ENCODE measurements at regions of chr1 and their contacts with region 1.

Region 1: GRCh38 chr1:19010995-19011844 is 54.7 kb upstream of the IFFO2 start:
- DNase-seq: peak; percentile 95
- ATAC-seq: peak; percentile 61
- H3K4me3 ChIP-seq: peak overlapping the region; percentile 42 to 67 (median 43); a peak in 5 of 6 replicates
- H3K27ac ChIP-seq: peak overlapping the region; percentile 63
- H3K4me1 ChIP-seq: peaks cover 88% of the 10 kb centered on the region
- H3K27me3 ChIP-seq: no peaks in the 10 kb centered on the region
- CTCF ChIP-seq: no peak
- EP300 ChIP-seq: peak in 1 of 2 experiments; percentile 85; a peak in 2 of 4 replicates
- POLR2A ChIP-seq: peak in 1 of 2 experiments; percentile 55; a peak in 1 of 4 replicates
- RAD21 ChIP-seq: no peak

Region 2: GRCh38 chr1:18902523-18903290 is 108.5 kb before region 1 on chr1 and contains the start of gene ALDH4A1:
- CTCF ChIA-PET with region 1: no interaction called
- POLR2A ChIA-PET with region 1: interaction called, 6 read pairs
- in situ Hi-C with region 1: no loop called
- intact Hi-C with region 1: loop called (anchors 2 kb)
- DNase-seq: peak; percentile 98
- ATAC-seq: peak; percentile 89
- H3K4me3 ChIP-seq: peak within 1 kb of the TSS; percentile 81 to 95 (median 94)
- H3K27ac ChIP-seq: peak within 1 kb of the TSS; percentile 95
- H3K4me1 ChIP-seq: peaks cover 45% of the 10 kb centered on the region
- H3K27me3 ChIP-seq: no peaks in the 10 kb centered on the region
- CTCF ChIP-seq: peak; percentile 47
- EP300 ChIP-seq: no peak
- POLR2A ChIP-seq: peak; percentile 75 to 77
- RAD21 ChIP-seq: 0 out of 2 replicates have a peak, but pooled peaks have one; percentile 7
- total RNA-seq, gene ALDH4A1: 58.5 and 76.4 TPM in 2 replicates

Region 3: DNA sequence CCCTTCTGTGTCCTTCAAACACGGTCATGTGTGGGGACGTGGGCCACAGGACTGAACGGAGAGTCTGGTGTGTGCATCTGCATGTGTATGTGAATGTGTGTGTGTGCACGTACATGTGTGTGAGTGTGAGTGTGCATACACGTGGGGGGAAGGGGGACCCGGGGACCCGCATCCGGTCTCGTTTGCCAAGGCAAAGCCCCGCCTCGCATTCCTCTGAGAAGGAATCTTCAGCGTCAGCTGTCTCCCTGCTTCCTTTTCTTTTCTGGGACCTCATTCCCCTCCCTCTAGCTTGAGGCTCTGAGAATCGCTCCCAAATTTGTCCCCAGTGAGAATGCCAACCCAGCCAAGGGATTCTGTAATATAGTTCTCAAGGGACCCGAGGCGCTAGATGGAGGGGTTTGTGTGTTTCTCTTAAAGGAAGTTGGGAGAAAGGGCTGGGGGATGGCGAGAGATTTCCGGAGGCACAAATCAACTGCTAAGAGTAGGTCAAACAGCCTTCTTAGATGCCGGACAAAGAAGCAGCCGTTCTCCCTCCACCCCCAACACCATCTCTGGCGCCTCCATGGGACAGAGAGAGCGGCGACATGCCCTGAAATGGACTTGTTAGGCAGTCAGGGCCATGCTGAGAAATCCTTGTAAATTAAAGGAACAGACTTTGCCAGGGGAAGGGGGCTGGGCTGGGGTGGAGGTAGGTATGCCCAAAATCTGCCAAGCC is 61.4 kb before region 1 on chr1:
- CTCF ChIA-PET with region 1: no interaction called
- POLR2A ChIA-PET with region 1: interaction called, 37 read pairs
- in situ Hi-C with region 1: loop called (anchors 5 kb)
- intact Hi-C with region 1: loop called (anchors 1 kb)
- DNase-seq: peak; percentile 48
- ATAC-seq: peak; percentile 54
- H3K4me3 ChIP-seq: peak overlapping the region; percentile 53 to 75 (median 73)
- H3K27ac ChIP-seq: peak overlapping the region; percentile 93
- H3K4me1 ChIP-seq: peaks cover 95% of the 10 kb centered on the region
- H3K27me3 ChIP-seq: no peaks in the 10 kb centered on the region
- CTCF ChIP-seq: peak; percentile 45
- EP300 ChIP-seq: no peak
- POLR2A ChIP-seq: no peak
- RAD21 ChIP-seq: no peak; the same call in 1 of the 2 replicates

Region 4: DNA sequence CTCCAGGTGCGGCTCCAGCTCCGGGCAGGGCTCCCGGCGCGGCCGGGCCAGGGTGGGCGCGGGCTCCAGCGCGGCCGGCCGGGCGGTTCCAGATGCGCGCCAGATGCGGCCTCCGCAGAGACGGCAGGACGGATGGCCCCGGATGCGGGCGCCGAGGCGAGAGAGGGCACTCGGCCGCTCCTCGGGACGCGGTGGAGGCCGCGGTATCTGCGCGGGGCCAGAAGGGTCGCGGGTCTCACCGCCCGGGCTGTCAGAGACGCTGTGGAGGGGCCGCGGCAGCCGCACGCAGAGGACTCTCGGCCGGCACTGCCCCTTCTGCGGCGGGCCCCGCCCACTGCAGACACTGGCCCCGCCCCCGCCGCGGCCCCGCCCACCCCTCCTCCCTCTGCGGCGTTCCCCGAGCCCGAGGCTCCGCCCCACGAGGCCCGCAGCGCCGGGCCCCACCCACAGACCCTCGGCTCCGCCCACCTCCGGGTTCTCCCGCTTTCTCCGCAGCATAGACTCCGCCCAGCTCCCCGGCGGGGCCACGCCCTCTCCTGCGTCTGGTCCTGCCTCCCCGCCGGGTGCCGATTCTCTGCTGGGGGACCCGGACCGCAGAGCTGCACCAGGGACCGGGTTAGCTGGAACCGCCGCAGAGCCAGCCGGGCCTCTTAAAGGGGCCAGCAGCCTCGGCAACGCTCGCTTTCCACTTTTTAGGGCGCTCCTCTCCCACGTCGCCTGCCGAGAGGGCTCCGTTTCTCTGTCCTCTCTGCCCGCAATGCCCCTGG is 54.7 kb before region 1 on chr1 and contains the start of gene IFFO2:
- CTCF ChIA-PET with region 1: no interaction called
- POLR2A ChIA-PET with region 1: interaction called, 37 read pairs
- in situ Hi-C with region 1: loop called (anchors 5 kb)
- intact Hi-C with region 1: loop called (anchors 1 kb)
- DNase-seq: peak; percentile 85
- ATAC-seq: peak; percentile 82
- H3K4me3 ChIP-seq: peak within 1 kb of the TSS; percentile 88 to 93 (median 89)
- H3K27ac ChIP-seq: peak within 1 kb of the TSS; percentile 47
- H3K4me1 ChIP-seq: peaks cover 71% of the 10 kb centered on the region
- H3K27me3 ChIP-seq: 0 out of 5 replicates have a peak, but pooled peaks cover 0 to 3% of the 10 kb centered on the region in 2 experiments
- CTCF ChIP-seq: no peak
- EP300 ChIP-seq: no peak
- POLR2A ChIP-seq: peak in 1 of 2 experiments; percentile 83; a peak in 2 of 4 replicates
- RAD21 ChIP-seq: peak; percentile 24; the same call in 1 of the 2 replicates
- total RNA-seq, gene IFFO2: 16.3 and 16.7 TPM in 2 replicates

Region 5: GRCh38 chr1:19044975-19045831 is 34.0 kb after region 1 on chr1:
- CTCF ChIA-PET with region 1: no interaction called
- POLR2A ChIA-PET with region 1: interaction called, 13 read pairs
- in situ Hi-C with region 1: no loop called
- intact Hi-C with region 1: loop called (anchors 5 kb)
- DNase-seq: no peak
- ATAC-seq: peak; percentile 7; the same call in 1 of the 3 replicates
- H3K4me3 ChIP-seq: no peak overlapping the region
- H3K27ac ChIP-seq: peak overlapping the region; percentile 68
- H3K4me1 ChIP-seq: peaks cover 63% of the 10 kb centered on the region
- H3K27me3 ChIP-seq: no peaks in the 10 kb centered on the region
- CTCF ChIP-seq: no peak
- EP300 ChIP-seq: no peak
- POLR2A ChIP-seq: no peak
- RAD21 ChIP-seq: no peak

Region 6: DNA sequence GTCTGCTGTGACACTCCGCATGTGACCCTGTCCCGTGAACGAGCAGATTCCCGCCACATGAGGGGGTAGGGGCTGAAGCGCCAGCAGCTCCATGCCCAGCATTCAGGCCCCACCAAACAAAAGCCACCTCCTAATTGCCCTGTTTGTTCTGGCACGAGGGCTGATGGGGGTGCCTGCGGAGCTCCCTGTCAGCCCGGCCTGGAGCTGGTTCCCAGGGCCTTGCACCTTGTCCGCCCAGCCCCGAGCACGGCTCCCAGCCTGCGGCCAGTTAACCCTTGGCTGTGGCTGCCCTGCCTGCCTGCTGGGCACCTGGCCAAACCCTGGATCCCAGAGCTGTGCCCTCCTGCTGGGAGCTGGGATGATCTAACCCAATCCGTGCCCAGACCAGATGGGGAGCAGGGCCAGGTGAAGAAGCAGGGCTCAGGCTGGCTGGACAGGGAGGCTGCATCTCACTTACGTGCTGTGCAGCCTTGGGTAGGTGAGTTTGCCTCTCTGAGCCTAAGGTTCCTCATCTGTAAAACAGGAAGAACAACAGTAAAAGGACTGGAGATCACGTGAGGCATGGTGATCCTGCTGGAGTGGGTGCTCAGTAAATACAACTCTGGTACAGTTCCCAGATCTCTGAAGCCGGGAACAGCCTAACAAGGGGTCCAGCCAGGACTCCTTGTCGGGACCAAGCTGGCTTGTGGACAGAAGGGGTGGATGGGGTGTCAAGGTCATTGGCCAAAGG is 56.1 kb after region 1 on chr1:
- CTCF ChIA-PET with region 1: no interaction called
- POLR2A ChIA-PET with region 1: interaction called, 3 read pairs
- in situ Hi-C with region 1: no loop called
- intact Hi-C with region 1: loop called (anchors 5 kb)
- DNase-seq: peak; percentile 82
- ATAC-seq: peak; percentile 48
- H3K4me3 ChIP-seq: peak overlapping the region in 2 of 3 experiments; percentile 9 to 53; a peak in 3 of 6 replicates
- H3K27ac ChIP-seq: no peak overlapping the region
- H3K4me1 ChIP-seq: peaks cover 84% of the 10 kb centered on the region
- H3K27me3 ChIP-seq: peaks cover 0 to 8% of the 10 kb centered on the region in 2 experiments; a peak in 2 of 5 replicates
- CTCF ChIP-seq: peak; percentile 36; the same call in 1 of the 2 replicates
- EP300 ChIP-seq: no peak
- POLR2A ChIP-seq: no peak
- RAD21 ChIP-seq: peak; percentile 19; the same call in 1 of the 2 replicates

Region 7: DNA sequence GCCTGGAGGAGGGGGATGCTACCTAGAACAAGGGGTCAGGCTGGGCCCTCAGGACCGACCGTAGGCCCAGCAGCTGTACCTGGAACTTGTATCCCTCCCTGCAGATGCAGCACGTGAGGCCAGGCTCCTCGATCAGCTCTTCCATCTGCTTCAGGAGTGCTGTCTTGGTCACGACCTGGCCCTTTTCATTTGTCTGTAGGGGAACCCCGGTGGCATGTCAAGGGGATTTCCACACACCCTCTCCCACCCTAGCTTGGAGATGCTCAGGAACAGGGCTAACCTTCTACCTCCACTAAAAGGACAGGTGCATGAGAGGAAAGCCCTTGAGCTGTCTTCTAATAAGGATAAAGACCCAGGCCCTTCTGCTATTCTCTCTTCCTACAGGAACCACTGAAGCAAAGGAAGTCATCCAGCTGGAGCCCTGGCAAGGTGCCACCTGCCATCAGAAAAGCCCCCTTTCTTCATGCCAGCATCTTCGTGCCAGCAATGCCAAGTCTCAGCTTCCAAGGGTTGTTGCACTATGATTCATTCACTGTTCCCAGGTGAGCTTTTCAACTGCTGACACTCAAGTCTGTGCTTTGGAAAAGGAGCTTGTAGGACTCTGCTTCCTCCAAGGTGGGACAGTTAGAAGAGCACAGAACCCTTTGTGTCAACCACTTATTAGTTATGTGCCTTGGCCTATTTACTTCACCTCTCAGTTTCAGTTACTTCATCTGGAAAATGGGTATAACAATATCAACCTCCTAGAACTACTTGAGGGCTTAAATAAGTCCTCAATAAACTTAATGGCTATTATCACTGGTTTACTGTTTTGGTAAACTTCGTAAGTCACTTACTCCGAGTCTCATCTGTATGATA is 76.7 kb after region 1 on chr1:
- CTCF ChIA-PET with region 1: no interaction called
- POLR2A ChIA-PET with region 1: interaction called, 4 read pairs
- in situ Hi-C with region 1: no loop called
- intact Hi-C with region 1: loop called (anchors 5 kb)
- DNase-seq: no peak
- ATAC-seq: peak; percentile 53
- H3K4me3 ChIP-seq: no peak overlapping the region
- H3K27ac ChIP-seq: no peak overlapping the region
- H3K4me1 ChIP-seq: peaks cover 17% of the 10 kb centered on the region
- H3K27me3 ChIP-seq: no peaks in the 10 kb centered on the region
- CTCF ChIP-seq: no peak
- EP300 ChIP-seq: no peak
- POLR2A ChIP-seq: no peak
- RAD21 ChIP-seq: no peak

Region 8: DNA sequence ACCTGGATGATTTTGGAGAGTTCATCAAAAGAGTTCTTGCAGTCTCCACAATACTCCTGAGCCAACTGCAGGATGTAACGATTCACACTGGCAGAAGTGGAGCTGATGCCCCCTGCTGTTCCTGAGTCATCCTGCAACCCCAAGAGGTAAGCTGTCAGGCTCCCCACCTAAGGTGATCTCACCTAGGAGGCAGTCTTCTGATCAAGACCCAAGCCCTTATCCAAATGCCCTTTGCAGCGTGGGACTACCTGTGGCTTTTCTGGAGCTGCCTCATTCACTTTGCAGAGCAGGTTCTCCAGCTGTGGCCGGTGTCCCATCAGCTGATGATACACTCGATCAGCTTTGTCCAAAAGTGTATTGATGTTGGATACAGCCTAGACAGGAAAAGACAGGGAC is 102.5 kb after region 1 on chr1:
- CTCF ChIA-PET with region 1: no interaction called
- POLR2A ChIA-PET with region 1: no interaction called
- in situ Hi-C with region 1: no loop called
- intact Hi-C with region 1: no loop called
- DNase-seq: peak; percentile 46
- ATAC-seq: peak; percentile 89
- H3K4me3 ChIP-seq: no peak overlapping the region
- H3K27ac ChIP-seq: no peak overlapping the region
- H3K4me1 ChIP-seq: no peaks in the 10 kb centered on the region
- H3K27me3 ChIP-seq: no peaks in the 10 kb centered on the region
- CTCF ChIP-seq: peak; percentile 77
- EP300 ChIP-seq: no peak
- POLR2A ChIP-seq: no peak
- RAD21 ChIP-seq: peak; percentile 42; the same call in 1 of the 2 replicates

Region 9: GRCh38 chr1:19128968-19129514 is 117.8 kb after region 1 on chr1:
- CTCF ChIA-PET with region 1: no interaction called
- POLR2A ChIA-PET with region 1: no interaction called
- in situ Hi-C with region 1: no loop called
- intact Hi-C with region 1: no loop called
- DNase-seq: no peak
- ATAC-seq: no peak
- H3K4me3 ChIP-seq: no peak overlapping the region
- H3K27ac ChIP-seq: no peak overlapping the region
- H3K4me1 ChIP-seq: peaks cover 22% of the 10 kb centered on the region
- H3K27me3 ChIP-seq: no peaks in the 10 kb centered on the region
- CTCF ChIP-seq: no peak
- EP300 ChIP-seq: no peak
- POLR2A ChIP-seq: no peak
- RAD21 ChIP-seq: no peak